WTC11 (cell line): ENCODE measurements at regions of chr6 and their contacts with region 1.

Region 1: DNA sequence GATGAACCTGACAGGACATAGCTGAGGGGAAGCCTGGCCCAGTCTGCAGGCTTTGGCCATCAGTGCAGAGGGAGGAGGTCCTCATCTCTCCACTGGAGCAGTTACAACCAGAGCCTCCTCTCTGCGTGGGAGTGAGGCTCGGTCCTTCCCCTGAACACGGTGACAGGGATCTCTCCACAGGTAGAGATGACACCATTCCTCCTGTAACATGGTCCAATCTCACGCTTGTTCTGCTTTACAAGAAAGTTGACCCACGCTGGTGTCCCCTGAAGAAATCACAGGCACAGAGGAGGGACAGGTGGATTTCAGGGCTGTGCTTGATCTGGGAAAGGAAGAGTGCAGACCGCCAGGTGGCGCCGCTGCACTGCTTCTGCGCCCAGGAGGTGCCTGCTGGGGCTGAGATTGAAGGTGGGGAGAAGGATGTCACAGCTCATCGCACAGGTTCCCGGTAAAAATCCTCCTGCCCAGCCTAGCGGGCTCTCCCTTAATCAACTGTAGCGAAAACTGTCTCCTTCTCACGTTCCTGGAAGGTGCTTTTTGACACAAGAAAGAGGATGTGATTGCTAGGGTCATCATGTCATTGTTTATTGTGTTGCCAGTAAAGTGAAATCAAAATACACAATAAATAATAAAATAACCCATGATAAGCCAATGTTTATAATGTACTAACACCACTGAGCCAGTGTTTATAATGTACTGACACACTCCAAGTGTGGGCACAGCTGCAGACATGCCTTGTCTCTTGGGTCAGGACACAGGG is 20.4 kb downstream of the HLA-G start:
- DNase-seq: peak; percentile 91
- ATAC-seq: peak; percentile 85
- H3K4me3 Mint-ChIP-seq: no peak overlapping the region
- H3K27ac Mint-ChIP-seq: no peak overlapping the region
- H3K4me1 Mint-ChIP-seq: peaks cover 30% of the 10 kb centered on the region
- H3K27me3 Mint-ChIP-seq: peaks cover 56% of the 10 kb centered on the region
- CTCF ChIP-seq: peak; percentile 95

Region 2: GRCh38 chr6:30013291-30013922 is 165.4 kb after region 1 on chr6:
- CTCF ChIA-PET with region 1: interaction called, 16 read pairs
- POLR2A ChIA-PET with region 1: no interaction called
- DNase-seq: peak; percentile 38
- ATAC-seq: peak; percentile 95
- H3K4me3 Mint-ChIP-seq: no peak overlapping the region
- H3K27ac Mint-ChIP-seq: no peak overlapping the region
- H3K4me1 Mint-ChIP-seq: no peaks in the 10 kb centered on the region
- H3K27me3 Mint-ChIP-seq: peaks cover 25% of the 10 kb centered on the region
- CTCF ChIP-seq: peak; percentile 74